ENCODE measurements at regions of chr3 and their contacts with region 1.

Region 1: GRCh38 chr3:3196148-3196861 is 16.8 kb upstream of the CRBN start:
- DNase-seq: no peak
- H3K4me3 Mint-ChIP-seq: no peak overlapping the region
- H3K27ac Mint-ChIP-seq: no peak overlapping the region
- H3K4me1 Mint-ChIP-seq: peaks cover 15% of the 10 kb centered on the region
- H3K27me3 Mint-ChIP-seq: peaks cover 5% of the 10 kb centered on the region

Region 2: DNA sequence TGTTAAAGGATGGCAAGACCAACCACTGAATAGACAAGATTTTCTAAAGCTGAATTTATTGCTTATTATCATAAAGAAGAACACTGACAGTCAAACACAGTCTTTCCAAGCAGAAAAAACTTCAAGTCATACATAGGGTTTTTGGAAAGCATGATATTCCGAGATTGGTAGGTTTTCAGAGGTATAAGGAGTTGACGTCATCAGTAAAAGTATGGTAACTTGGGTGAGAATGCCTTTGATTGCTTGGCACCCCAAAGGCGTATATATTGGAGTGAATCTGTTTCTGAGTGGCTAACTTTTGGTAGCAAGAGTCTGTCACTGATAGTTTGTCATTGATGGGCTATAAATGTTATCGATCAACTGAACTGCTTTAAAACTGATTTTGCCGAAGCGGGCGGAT is 1325.6 kb before region 1 on chr3:
- intact Hi-C with region 1: no loop called
- DNase-seq: no peak
- H3K4me3 Mint-ChIP-seq: no peak overlapping the region
- H3K27ac Mint-ChIP-seq: no peak overlapping the region
- H3K4me1 Mint-ChIP-seq: no peaks in the 10 kb centered on the region
- H3K27me3 Mint-ChIP-seq: no peaks in the 10 kb centered on the region

Region 3: DNA sequence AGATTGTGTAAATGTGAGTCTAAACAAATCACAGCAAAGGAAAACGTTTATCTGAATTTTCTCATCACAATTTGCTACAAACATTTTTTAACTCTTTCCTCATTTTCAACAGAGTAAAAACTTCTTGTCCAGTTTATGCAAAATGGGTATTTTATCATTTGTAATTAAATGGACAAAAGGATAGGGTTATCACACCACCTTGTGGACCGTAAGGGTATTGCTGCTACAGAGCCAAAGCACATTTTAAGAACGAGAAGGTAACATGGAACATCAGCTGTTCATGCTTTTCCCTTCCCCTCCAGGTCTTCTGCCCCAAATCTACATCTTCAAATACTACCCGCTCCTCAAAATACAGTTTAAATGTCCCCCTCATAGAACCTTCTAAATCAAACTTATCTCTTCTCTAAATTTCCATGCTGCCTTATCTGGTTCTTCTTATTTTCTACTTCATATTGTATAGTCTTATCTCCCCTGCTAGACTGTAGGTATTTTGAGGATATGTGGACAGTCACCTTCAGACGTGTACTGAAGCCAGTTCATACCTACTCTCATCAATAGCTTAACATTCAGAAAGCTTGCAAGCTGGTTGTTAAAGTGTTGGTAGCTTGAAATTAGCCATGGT is 1094.1 kb after region 1 on chr3:
- intact Hi-C with region 1: loop called (anchors 5 kb)
- DNase-seq: peak; percentile 77
- H3K4me3 Mint-ChIP-seq: no peak overlapping the region
- H3K27ac Mint-ChIP-seq: no peak overlapping the region
- H3K4me1 Mint-ChIP-seq: no peaks in the 10 kb centered on the region
- H3K27me3 Mint-ChIP-seq: peaks cover 21% of the 10 kb centered on the region